CD4-positive, alpha-beta T cell (primary cell): ENCODE measurements at regions of chr7 and their contacts with region 1.

Region 1: GRCh38 chr7:158829342-158830210 is at the start of gene ESYT2:
- DNase-seq: peak; percentile 98 to 100 (median 100)
- ATAC-seq: peak; percentile 77
- H3K4me3 ChIP-seq: peak within 1 kb of the TSS; percentile 83
- H3K4me3 Mint-ChIP-seq: peak within 1 kb of the TSS; percentile 93
- H3K27ac ChIP-seq: peak within 1 kb of the TSS; percentile 91 to 95
- H3K27ac Mint-ChIP-seq: peak within 1 kb of the TSS; percentile 92
- H3K4me1 ChIP-seq: peaks cover 33% of the 10 kb centered on the region
- H3K4me1 Mint-ChIP-seq: peaks cover 34% of the 10 kb centered on the region
- H3K27me3 ChIP-seq: no peaks in the 10 kb centered on the region
- H3K27me3 Mint-ChIP-seq: no peaks in the 10 kb centered on the region
- CTCF ChIP-seq: no peak
- total RNA-seq, gene ESYT2: 106 to 112 TPM

Region 2: GRCh38 chr7:157670490-157671357 is 1158.9 kb before region 1 on chr7:
- CTCF ChIA-PET with region 1: no interaction called
- POLR2A ChIA-PET with region 1: no interaction called
- intact Hi-C with region 1: no loop called
- DNase-seq: peak in 1 of 14 experiments; percentile 31
- ATAC-seq: no peak
- H3K4me3 ChIP-seq: no peak overlapping the region
- H3K4me3 Mint-ChIP-seq: no peak overlapping the region
- H3K27ac ChIP-seq: no peak overlapping the region
- H3K27ac Mint-ChIP-seq: no peak overlapping the region
- H3K4me1 ChIP-seq: peaks cover 19% of the 10 kb centered on the region
- H3K4me1 Mint-ChIP-seq: peaks cover 28% of the 10 kb centered on the region
- H3K27me3 ChIP-seq: peaks cover 6 to 11% of the 10 kb centered on the region in 2 experiments
- H3K27me3 Mint-ChIP-seq: peaks cover 37% of the 10 kb centered on the region
- CTCF ChIP-seq: no peak

Region 3: DNA sequence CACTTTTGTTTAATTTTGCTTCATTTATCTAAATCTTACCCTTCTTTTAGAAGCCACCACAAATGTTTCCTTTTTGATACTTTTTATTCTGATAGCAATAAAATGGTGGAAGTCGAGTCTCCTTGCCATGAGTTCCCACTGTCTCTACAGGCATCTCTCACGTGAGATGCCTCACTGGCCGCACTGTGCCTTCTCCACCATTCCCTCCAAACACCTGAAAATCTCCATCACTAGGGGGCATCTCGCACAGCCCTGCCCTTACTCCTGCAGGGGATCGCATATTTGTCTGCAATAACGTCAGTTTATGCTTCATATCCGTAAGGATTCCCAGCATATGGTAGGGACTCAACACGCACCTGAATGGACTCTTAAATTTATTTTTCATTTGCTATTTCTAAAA is 68.6 kb before region 1 on chr7:
- CTCF ChIA-PET with region 1: interaction called, 3 read pairs
- POLR2A ChIA-PET with region 1: interaction called, 4 read pairs
- intact Hi-C with region 1: loop called in 1 of 2 experiments (anchors 5 kb)
- DNase-seq: peak in 7 of 14 experiments; percentile 10 to 59 (median 46)
- ATAC-seq: peak; percentile 63
- H3K4me3 ChIP-seq: no peak overlapping the region
- H3K4me3 Mint-ChIP-seq: no peak overlapping the region
- H3K27ac ChIP-seq: no peak overlapping the region
- H3K27ac Mint-ChIP-seq: peak overlapping the region; percentile 48
- H3K4me1 ChIP-seq: no peaks in the 10 kb centered on the region
- H3K4me1 Mint-ChIP-seq: peaks cover 9% of the 10 kb centered on the region
- H3K27me3 ChIP-seq: no peaks in the 10 kb centered on the region
- H3K27me3 Mint-ChIP-seq: no peaks in the 10 kb centered on the region
- CTCF ChIP-seq: peak; percentile 57

Region 4: DNA sequence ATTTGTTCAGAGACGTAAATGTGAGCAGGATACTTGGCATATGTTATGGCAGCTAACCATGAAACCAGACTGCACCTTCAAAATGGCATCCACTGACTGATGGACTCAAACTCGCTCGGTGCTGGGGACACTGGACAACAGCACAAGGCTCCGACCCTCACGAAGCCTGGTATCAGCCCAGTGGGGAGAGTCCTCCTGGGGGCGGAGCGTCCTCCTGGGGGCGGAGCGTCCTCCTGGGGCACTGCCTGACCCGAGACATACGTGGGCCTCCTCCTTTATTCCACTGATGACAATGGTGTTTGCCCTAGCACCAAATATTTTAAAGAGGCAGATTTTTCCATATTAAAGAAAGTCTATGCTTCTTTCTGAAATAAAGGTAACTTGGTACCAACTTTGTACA is 39.7 kb before region 1 on chr7:
- CTCF ChIA-PET with region 1: interaction called, 3 read pairs
- POLR2A ChIA-PET with region 1: interaction called, 8 read pairs
- intact Hi-C with region 1: loop called in 1 of 2 experiments (anchors 5 kb)
- DNase-seq: no peak
- ATAC-seq: no peak
- H3K4me3 ChIP-seq: no peak overlapping the region
- H3K4me3 Mint-ChIP-seq: no peak overlapping the region
- H3K27ac ChIP-seq: no peak overlapping the region
- H3K27ac Mint-ChIP-seq: peak overlapping the region; percentile 44
- H3K4me1 ChIP-seq: no peaks in the 10 kb centered on the region
- H3K4me1 Mint-ChIP-seq: peaks cover 11% of the 10 kb centered on the region
- H3K27me3 ChIP-seq: no peaks in the 10 kb centered on the region
- H3K27me3 Mint-ChIP-seq: no peaks in the 10 kb centered on the region
- CTCF ChIP-seq: no peak

Region 5: GRCh38 chr7:158818325-158819213 is 11.0 kb before region 1 on chr7:
- CTCF ChIA-PET with region 1: interaction called, 8 read pairs
- POLR2A ChIA-PET with region 1: interaction called, 256 read pairs
- intact Hi-C with region 1: loop called (anchors 1 to 2 kb)
- DNase-seq: peak; percentile 35 to 94 (median 62)
- ATAC-seq: peak; percentile 63
- H3K4me3 ChIP-seq: peak overlapping the region; percentile 58
- H3K4me3 Mint-ChIP-seq: peak overlapping the region; percentile 81
- H3K27ac ChIP-seq: peak overlapping the region; percentile 88 to 96
- H3K27ac Mint-ChIP-seq: peak overlapping the region; percentile 97
- H3K4me1 ChIP-seq: peaks cover 75% of the 10 kb centered on the region
- H3K4me1 Mint-ChIP-seq: peaks cover 90% of the 10 kb centered on the region
- H3K27me3 ChIP-seq: no peaks in the 10 kb centered on the region
- H3K27me3 Mint-ChIP-seq: no peaks in the 10 kb centered on the region
- CTCF ChIP-seq: no peak

Region 6: GRCh38 chr7:158856883-158857668 is 27.5 kb after region 1 on chr7:
- CTCF ChIA-PET with region 1: interaction called, 3 read pairs
- POLR2A ChIA-PET with region 1: interaction called, 6 read pairs
- intact Hi-C with region 1: loop called (anchors 1 to 2 kb)
- DNase-seq: no peak
- ATAC-seq: peak; percentile 4
- H3K4me3 ChIP-seq: peak overlapping the region; percentile 70
- H3K4me3 Mint-ChIP-seq: peak overlapping the region; percentile 88
- H3K27ac ChIP-seq: peak overlapping the region in 1 of 2 donors; percentile 69
- H3K27ac Mint-ChIP-seq: peak overlapping the region; percentile 45
- H3K4me1 ChIP-seq: peaks cover 16% of the 10 kb centered on the region
- H3K4me1 Mint-ChIP-seq: peaks cover 42% of the 10 kb centered on the region
- H3K27me3 ChIP-seq: no peaks in the 10 kb centered on the region
- H3K27me3 Mint-ChIP-seq: no peaks in the 10 kb centered on the region
- CTCF ChIP-seq: no peak

Region 7: DNA sequence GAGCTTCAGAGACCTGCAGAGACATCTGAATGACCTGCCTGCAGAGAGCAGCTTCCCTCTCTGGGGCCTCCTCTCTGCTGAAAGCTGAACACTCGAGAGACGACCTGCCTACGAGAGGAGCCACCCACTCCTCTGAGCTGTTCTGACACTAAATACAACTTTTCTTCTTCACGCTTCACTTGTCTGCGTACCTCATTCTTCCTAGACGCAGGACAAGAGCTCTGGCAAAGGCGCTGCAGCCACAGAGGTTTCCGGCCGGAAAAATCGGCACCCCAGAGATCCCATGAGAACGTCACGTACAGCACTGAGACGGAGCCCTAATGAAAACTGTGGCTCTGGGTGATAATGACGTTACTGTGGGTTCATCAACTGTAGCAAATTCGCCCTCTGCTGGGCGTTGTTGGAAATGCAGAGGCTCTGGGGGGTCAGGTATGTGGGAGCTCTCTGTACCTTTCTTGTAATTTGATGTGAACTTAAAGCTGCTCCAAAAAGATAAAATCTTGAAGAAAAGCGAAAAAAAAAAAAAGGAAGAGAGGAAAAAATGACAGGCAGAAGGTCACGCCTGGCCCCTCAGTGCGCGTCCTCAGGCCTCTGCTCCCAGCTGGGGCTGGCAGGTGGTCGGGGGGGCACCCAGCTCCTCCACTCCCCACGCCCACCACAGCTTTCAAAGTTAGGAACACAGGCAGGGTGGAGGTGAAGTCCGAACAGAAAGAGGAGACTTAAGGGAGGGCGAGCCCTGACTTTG is 147.4 kb after region 1 on chr7:
- CTCF ChIA-PET with region 1: no interaction called
- POLR2A ChIA-PET with region 1: interaction called, 13 read pairs
- intact Hi-C with region 1: no loop called
- DNase-seq: peak; percentile 83 to 96 (median 92)
- ATAC-seq: peak; percentile 85
- H3K4me3 ChIP-seq: peak overlapping the region; percentile 55
- H3K4me3 Mint-ChIP-seq: peak overlapping the region; percentile 93
- H3K27ac ChIP-seq: no peak overlapping the region
- H3K27ac Mint-ChIP-seq: peak overlapping the region; percentile 77
- H3K4me1 ChIP-seq: peaks cover 26% of the 10 kb centered on the region
- H3K4me1 Mint-ChIP-seq: peaks cover 22% of the 10 kb centered on the region
- H3K27me3 ChIP-seq: no peaks in the 10 kb centered on the region
- H3K27me3 Mint-ChIP-seq: no peaks in the 10 kb centered on the region
- CTCF ChIP-seq: peak; percentile 89

Region 8: GRCh38 chr7:158988996-158989395 is 159.4 kb after region 1 on chr7:
- CTCF ChIA-PET with region 1: no interaction called
- POLR2A ChIA-PET with region 1: no interaction called
- intact Hi-C with region 1: no loop called
- DNase-seq: no peak
- ATAC-seq: no peak
- H3K4me3 ChIP-seq: no peak overlapping the region
- H3K4me3 Mint-ChIP-seq: no peak overlapping the region
- H3K27ac ChIP-seq: no peak overlapping the region
- H3K27ac Mint-ChIP-seq: no peak overlapping the region
- H3K4me1 ChIP-seq: peaks cover 13% of the 10 kb centered on the region
- H3K4me1 Mint-ChIP-seq: peaks cover 23% of the 10 kb centered on the region
- H3K27me3 ChIP-seq: peaks cover 18 to 19% of the 10 kb centered on the region in 2 experiments
- H3K27me3 Mint-ChIP-seq: peaks cover 32% of the 10 kb centered on the region
- CTCF ChIP-seq: no peak